ENCODE measurements at regions of chr17 and their contacts with region 1.

Region 1: GRCh38 chr17:66405836-66406677 is 103.6 kb downstream of the PRKCA start:
- H3K4me3 Mint-ChIP-seq: no peak overlapping the region
- H3K27ac Mint-ChIP-seq: no peak overlapping the region
- H3K4me1 Mint-ChIP-seq: peaks cover 40% of the 10 kb centered on the region
- H3K27me3 Mint-ChIP-seq: peaks cover 2% of the 10 kb centered on the region

Region 2: GRCh38 chr17:66351053-66351452 is 55.0 kb before region 1 on chr17:
- intact Hi-C with region 1: loop called (anchors 10 kb)
- H3K4me3 Mint-ChIP-seq: no peak overlapping the region
- H3K27ac Mint-ChIP-seq: no peak overlapping the region
- H3K4me1 Mint-ChIP-seq: peaks cover 17% of the 10 kb centered on the region
- H3K27me3 Mint-ChIP-seq: no peaks in the 10 kb centered on the region

Measured in dendritic cell treated with granulocyte-macrophage colony-stimulating factor and Interleukin-4, amounts not matched to agents 40 ng/mL and 50 ng/mL, for 4 days (primary cell).